Heart left ventricle (tissue), 16 donors: ENCODE measurements at regions of chr17 and their contacts with region 1.

Region 1: DNA sequence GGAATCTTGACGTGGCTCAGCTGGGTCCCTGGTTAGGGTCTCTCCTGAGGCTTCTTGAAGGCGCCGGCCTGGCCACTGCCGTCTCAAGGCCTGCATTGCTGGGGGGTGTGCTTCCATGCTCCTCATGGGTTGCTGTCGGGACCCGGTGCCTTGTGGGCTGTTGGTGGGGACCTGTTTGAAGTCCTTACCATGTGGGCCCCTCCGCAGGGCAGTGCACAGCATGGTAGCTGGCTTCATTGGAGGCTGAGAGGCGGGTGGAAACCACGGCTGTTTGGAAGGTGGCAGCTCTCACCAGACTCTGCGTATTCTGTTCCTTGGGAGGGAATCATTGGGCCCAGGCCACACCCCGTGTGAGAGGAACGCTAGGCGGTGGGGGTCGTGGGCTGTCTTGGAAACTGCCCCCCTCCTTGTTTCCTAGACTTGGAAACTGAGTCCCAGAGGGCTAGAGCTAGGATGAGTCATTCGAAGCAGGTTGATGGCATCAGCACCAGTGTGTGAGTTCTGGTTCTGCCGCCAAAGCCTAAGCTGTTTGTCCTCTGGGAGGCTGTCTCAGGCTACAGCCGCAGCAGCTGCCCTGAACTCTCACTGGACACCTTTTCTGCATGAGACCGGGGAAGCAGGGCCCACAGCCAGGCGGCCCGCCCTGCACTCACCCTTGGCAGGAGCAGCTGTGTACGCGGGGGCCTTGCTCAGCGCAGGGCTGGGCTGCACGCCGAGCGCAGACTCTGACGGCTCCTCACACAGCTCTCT is 35.2 kb downstream of the ZNF750 start:
- DNase-seq: peak; percentile 80 to 90 (median 86)
- ATAC-seq: peak; percentile 88 to 92 (median 90)
- H3K4me3 ChIP-seq: no peak overlapping the region
- H3K27ac ChIP-seq: peak overlapping the region; percentile 37 to 87 (median 74)
- H3K4me1 ChIP-seq: peaks cover 7 to 47% (median 30%) of the 10 kb centered on the region in 12 donors
- H3K27me3 ChIP-seq: no peaks in the 10 kb centered on the region
- CTCF ChIP-seq: peak in 2 of 12 donors; percentile 12 to 19
- POLR2A ChIP-seq: no peak

Region 2: DNA sequence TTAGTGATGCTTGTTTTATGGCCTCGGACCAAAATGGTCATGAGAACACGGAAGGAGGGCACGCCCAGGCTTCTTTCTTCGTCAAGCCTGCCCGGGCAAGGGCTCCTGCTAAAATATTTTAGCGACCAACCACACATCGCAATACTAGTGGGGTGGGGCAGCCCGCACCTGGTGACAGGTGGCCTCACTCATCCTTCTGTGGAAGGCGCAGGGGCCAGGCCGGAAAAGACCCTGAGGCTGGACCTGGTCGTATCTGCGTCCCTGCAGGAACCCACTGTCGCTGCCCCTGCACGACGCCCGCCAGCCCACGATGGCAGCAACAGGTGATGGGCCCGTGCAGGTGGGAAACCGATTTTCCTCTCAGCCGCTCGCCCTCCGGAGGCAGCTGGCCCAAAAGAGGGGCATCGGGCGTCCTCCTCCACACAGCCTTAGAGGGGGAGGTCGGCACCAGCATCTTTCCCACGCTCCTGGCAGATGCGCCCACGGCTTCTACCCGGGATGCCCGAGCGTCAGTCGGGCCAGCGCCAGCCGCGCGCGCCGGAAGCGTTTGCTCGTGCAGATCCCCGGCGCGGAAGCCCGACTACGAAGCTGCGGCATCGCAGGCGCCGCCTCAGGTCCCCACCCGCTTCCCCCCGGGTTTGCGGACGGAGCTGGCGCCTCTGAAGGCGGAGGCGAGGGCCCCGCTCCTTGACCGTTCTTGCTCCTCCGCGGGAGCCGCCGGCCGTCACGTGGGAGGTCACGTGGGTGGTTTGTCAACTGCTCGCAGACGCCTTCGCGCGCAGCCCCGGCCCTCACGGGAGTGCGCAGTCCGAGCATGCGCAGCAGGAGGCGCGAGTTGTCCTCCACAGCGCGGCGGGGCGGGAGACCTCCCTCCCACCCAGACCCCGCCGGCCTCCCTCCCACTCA is 307.8 kb before region 1 on chr17:
- intact Hi-C with region 1: no loop called
- DNase-seq: peak; percentile 97 to 99 (median 98)
- ATAC-seq: peak; percentile 74 to 89 (median 84)
- H3K4me3 ChIP-seq: peak overlapping the region; percentile 42 to 87 (median 70)
- H3K27ac ChIP-seq: peak overlapping the region; percentile 63 to 92 (median 88)
- H3K4me1 ChIP-seq: peaks cover 0 to 38% (median 12%) of the 10 kb centered on the region in 12 donors
- H3K27me3 ChIP-seq: no peaks in the 10 kb centered on the region
- CTCF ChIP-seq: no peak
- POLR2A ChIP-seq: peak in 1 of 2 donors; percentile 87

Region 3: DNA sequence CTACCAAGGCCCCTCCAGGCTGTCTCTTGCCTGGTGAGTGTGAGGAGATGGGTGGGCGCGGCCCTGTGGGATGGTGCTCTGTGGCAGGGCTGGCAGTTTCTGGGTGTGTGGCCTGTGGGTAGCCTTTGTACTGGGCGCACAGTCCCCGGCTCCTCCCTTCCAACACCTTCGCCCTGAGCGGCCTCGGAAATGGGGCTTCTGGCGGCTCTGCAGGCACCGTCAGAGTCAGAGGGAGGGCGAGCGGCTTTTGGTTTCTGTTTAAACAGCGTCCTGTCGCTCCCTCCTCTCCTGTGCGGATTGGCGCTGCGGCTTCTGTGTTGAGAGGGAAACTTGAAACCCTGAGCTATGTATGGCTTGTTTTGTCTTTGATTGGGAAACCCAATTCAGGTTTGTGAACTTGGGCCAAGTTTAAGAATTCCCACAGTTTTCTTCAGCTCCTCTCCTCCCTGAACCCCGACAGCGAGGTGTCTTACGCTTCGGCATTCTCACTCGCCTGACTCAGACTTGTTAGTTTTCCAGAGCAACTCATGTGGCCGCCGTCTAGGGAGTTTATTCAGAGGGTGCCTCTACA is 43.5 kb after region 1 on chr17:
- intact Hi-C with region 1: loop called in 1 of 10 experiments (anchors 2 kb)
- DNase-seq: peak in 1 of 5 donors; percentile 61
- ATAC-seq: peak in 3 of 4 donors; percentile 14 to 17 (median 15)
- H3K4me3 ChIP-seq: peak overlapping the region in 9 of 12 donors; percentile 2 to 50 (median 31)
- H3K27ac ChIP-seq: peak overlapping the region in 11 of 12 donors; percentile 6 to 94 (median 79)
- H3K4me1 ChIP-seq: peaks cover 0 to 20% (median 9%) of the 10 kb centered on the region in 12 donors
- H3K27me3 ChIP-seq: no peaks in the 10 kb centered on the region
- CTCF ChIP-seq: no peak
- POLR2A ChIP-seq: no peak

Region 4: GRCh38 chr17:82876602-82877379 is 72.2 kb after region 1 on chr17:
- intact Hi-C with region 1: loop called in 1 of 10 experiments (anchors 10 kb)
- DNase-seq: peak in 4 of 5 donors; percentile 81 to 91 (median 86)
- ATAC-seq: peak; percentile 92 to 96 (median 94)
- H3K4me3 ChIP-seq: no peak overlapping the region
- H3K27ac ChIP-seq: peak overlapping the region in 11 of 12 donors; percentile 36 to 78 (median 70)
- H3K4me1 ChIP-seq: peaks cover 3 to 77% (median 37%) of the 10 kb centered on the region in 12 donors
- H3K27me3 ChIP-seq: no peaks in the 10 kb centered on the region
- CTCF ChIP-seq: peak; percentile 30 to 76 (median 48)
- POLR2A ChIP-seq: no peak

Region 5: GRCh38 chr17:82917691-82918345 is 113.2 kb after region 1 on chr17:
- intact Hi-C with region 1: no loop called
- DNase-seq: peak in 1 of 5 donors; percentile 26
- ATAC-seq: peak in 1 of 4 donors; percentile 31
- H3K4me3 ChIP-seq: no peak overlapping the region
- H3K27ac ChIP-seq: no peak overlapping the region
- H3K4me1 ChIP-seq: peaks cover 0 to 15% (median 4%) of the 10 kb centered on the region in 12 donors
- H3K27me3 ChIP-seq: no peaks in the 10 kb centered on the region
- CTCF ChIP-seq: peak in 10 of 12 donors; percentile 11 to 57 (median 46)
- POLR2A ChIP-seq: no peak